AG04449 (cell line): ENCODE measurements at regions of chr4 and their contacts with region 1.

Region 1: DNA sequence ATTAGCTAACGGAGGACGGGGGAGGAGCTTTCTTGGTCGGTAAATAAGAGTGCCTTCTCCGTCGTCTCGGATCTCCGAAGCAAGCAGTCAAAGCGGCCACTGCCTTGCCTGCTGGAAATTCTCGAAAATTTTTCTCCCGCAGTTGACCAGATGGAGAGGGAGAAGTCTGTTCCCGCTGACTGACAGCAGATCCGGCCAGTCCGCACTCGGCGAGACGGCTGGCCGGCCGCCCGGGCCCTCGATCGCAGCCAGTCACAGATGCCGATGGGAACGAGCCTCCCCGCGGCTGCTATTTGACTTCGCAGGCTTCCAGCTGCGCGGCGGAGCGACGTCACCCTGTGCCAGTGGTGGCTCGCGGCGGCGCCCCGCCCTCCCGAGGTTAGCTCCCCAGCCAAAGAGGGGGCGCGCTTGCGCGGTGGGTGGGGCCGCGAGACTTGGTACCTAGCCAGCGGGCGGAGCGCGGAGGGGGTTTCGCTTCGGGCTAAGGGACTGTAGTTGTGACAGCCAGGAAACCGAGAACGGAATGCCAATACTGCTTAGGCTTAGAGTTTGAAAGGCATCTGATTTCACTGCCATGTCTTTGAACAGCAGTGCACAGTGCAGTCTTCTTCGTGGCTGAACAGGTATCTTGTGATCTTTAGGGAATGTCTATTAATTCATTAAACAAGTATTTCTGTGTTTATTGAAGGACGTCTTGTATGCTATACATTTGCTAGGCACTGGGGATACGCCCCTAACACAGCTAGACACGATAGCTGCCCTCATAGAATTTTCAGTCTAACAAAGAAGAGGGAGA is at the start of gene PPM1K:
- DNase-seq: peak; percentile 92
- H3K4me3 ChIP-seq: peak within 1 kb of the TSS; percentile 80
- CTCF ChIP-seq: peak; percentile 32

Region 2: DNA sequence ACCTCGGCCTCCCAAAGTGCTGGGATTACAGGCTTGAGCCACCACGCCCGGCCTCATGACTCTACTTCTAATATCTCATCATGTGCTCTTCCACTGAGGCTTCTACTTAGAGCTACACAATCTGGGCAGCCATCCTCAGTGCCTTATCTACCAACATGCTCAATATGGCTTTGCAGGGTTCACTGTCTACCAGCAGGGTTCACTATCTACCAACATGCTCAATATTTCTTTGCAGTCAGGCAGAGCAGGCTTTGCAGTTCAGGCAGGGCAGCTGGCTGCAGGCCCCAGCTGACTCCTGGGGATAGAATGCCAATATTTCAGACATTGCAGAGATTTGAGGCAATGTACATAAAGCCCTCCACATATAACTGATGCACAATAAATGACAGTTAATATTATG is 229.7 kb before region 1 on chr4:
- CTCF ChIA-PET with region 1: no interaction called
- POLR2A ChIA-PET with region 1: no interaction called
- DNase-seq: no peak
- H3K4me3 ChIP-seq: no peak overlapping the region
- CTCF ChIP-seq: peak; percentile 59

Region 3: GRCh38 chr4:88295656-88296055 is 11.0 kb after region 1 on chr4:
- CTCF ChIA-PET with region 1: no interaction called
- POLR2A ChIA-PET with region 1: interaction called, 10 read pairs
- DNase-seq: no peak
- H3K4me3 ChIP-seq: no peak overlapping the region
- CTCF ChIP-seq: no peak

Region 4: DNA sequence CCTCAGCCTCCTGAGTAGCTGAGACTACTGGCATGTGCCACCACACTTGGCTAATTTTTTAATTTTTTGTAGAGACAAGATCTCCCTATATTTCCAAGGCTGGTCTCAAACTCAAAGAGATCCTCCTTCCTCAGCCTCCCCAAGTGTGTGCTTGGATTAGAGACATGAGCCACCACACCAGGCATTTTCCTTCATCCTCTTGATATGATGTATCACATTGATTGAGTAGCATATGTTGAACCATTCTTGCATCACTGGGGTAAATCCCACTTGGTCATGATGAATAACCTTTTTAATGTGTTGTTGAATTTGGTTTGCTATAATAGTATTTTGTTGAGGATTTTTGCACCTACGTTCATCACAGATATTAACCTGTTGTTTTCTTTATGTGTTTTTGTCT is 23.9 kb after region 1 on chr4:
- CTCF ChIA-PET with region 1: no interaction called
- POLR2A ChIA-PET with region 1: no interaction called
- DNase-seq: no peak
- H3K4me3 ChIP-seq: no peak overlapping the region
- CTCF ChIP-seq: no peak